Head of caudate nucleus (tissue), 42 donors: ENCODE measurements at regions of chr11 and their contacts with region 1.

Region 1: DNA sequence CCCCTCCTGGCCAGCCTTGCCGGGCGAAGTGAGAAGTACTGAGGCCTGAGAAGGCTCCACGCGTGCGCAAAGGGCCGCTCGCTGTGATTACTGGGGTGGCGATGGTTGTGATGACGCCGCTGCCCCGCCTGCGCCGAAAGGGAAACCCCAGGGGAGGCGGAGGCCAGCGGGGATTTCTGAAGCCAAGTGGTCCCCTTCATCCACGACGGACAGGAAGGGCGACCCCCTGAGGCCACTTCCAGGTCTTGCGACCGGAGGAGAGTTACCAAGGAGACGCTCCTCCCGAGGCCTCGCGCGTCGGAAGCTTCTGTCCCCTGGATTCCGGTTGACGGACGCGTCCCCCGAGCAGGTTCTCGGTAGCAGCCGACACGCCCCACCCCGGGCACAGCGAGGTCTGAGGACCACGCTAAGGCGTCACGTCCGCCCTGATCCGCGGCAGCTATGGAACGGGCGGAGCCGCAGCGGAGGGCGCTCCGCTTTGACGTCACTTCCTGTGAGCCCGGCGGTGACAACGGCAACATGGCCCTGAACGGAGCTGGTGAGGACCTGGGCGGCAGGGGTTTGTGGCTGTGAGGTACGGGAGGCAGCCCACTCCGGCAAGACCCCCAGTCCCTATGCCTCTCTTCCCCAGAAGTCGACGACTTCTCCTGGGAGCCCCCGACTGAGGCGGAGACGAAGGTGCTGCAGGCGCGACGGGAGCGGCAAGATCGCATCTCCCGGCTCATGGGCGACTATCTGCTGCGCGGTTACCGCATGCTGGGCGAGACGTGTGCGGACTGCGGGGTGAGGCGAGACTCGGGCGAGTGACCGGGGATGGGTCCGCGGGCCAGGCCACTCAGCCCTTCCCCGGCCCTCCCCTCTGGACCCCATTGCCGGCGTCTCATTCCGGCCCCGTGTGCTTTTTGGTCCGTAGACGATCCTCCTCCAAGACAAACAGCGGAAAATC is at the start of gene ZNRD2:
- DNase-seq: peak; percentile 95 to 100 (median 99)

Region 2: GRCh38 chr11:65540297-65541092 is 29.8 kb before region 1 on chr11:
- intact Hi-C with region 1: loop called (anchors 2 kb)
- DNase-seq: peak; percentile 81 to 96 (median 91)

Region 3: DNA sequence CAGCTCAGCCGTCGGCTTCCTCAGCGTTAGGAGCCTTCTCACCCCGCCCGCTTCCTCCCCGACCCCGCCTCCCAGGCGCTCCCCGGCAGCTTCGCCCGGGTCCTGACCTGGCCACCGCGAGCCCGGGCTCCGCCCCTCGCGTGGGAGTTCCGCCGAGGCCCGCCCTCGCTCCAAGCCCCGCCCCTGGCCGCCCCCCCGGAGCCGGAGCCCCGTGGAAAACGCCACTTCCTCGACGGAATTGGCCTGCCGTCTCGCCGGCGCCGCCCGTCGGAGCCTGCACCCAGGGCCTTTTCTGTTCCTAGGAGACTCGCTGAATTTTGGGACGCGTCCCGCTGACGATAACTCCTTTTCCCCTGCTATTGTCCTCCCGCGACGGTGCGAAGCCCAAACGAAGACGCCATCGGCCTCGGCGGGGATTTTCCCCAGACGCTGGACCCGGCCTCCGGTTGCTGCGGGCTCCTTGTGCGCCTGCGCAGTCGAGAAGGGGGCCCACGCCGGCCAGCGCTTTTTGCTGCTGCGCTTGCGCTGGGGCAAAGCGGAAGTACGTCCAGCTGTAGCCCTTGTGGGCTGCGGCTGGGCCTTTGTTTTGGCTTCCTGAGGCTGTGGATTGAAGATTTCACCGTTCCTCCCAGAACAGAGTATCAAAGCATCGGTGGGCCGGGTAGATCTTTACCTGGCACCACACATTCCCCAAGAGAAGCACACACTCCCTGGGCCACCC is 82.4 kb after region 1 on chr11:
- intact Hi-C with region 1: no loop called
- DNase-seq: peak; percentile 68 to 95 (median 88)

Region 4: GRCh38 chr11:65685981-65686380 is 115.7 kb after region 1 on chr11:
- intact Hi-C with region 1: no loop called
- DNase-seq: no peak